Activated CD4-positive, alpha-beta T cell treated with anti-CD3 and anti-CD28 coated beads for 36 hours (primary cell): ENCODE measurements at regions of chr4 and their contacts with region 1.

Region 1: DNA sequence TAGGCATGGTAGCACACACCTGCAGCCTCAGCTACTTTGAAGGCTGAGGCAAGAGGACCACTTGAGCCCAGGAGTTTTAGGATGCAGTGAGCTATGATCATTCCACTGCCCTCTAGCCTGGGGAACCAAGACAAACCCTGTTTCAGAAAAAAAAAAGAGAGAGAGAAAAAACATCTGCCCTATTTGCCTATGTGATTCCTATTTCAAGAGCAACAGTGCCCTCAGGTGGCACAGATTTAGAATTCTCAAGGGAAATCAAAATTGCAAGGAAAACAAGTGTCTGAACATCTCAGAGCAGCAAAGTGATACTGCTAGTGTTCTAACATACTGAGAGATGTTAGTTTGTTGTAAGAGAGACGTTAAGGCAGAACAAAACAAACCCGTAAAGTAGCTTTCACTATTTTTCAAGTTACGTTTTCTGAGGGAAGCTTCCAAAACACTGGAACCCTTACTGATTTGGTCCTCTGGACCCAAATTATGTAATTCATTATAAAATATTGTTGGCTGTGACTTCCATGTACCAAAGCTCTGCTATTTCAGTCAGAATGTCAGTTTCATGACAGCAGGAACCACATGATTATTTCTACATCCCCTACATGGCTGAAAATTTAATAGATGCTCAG is 7.9 kb downstream of the BDH2 start:
- DNase-seq: peak; percentile 61
- ATAC-seq: peak; percentile 71
- H3K4me3 Mint-ChIP-seq: no peak overlapping the region
- H3K27ac Mint-ChIP-seq: peak overlapping the region; percentile 34
- H3K4me1 Mint-ChIP-seq: peaks cover 17% of the 10 kb centered on the region
- H3K27me3 Mint-ChIP-seq: no peaks in the 10 kb centered on the region

Region 2: GRCh38 chr4:102620697-102621497 is 470.8 kb before region 1 on chr4:
- CTCF ChIA-PET with region 1: interaction called, 5 read pairs
- POLR2A ChIA-PET with region 1: no interaction called
- intact Hi-C with region 1: loop called in 1 of 2 experiments (anchors 2 kb)
- DNase-seq: peak; percentile 30
- ATAC-seq: peak; percentile 25
- H3K4me3 Mint-ChIP-seq: no peak overlapping the region
- H3K27ac Mint-ChIP-seq: peak overlapping the region; percentile 47
- H3K4me1 Mint-ChIP-seq: peaks cover 50% of the 10 kb centered on the region
- H3K27me3 Mint-ChIP-seq: no peaks in the 10 kb centered on the region

Region 3: DNA sequence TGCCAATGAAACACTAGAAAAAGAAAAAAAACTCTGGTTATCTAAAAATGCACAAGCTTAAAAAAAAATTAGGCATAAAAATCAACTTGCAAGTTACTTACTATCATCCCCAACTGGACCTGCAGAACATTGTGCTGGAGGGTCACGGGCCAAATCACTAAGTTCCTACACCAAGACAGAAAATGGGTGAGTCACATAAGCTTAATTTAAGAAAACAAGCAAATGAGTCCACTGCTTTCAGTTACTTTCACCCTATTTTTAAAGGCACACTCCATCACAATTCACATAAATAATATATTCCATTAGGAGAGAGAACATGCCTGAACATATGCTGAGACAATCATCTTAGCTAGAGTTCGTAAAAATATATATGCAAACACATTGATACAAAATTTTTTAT is 282.0 kb before region 1 on chr4:
- CTCF ChIA-PET with region 1: no interaction called
- POLR2A ChIA-PET with region 1: interaction called, 10 read pairs
- intact Hi-C with region 1: no loop called
- DNase-seq: no peak
- ATAC-seq: no peak
- H3K4me3 Mint-ChIP-seq: no peak overlapping the region
- H3K27ac Mint-ChIP-seq: peak overlapping the region; percentile 58
- H3K4me1 Mint-ChIP-seq: peaks cover 90% of the 10 kb centered on the region
- H3K27me3 Mint-ChIP-seq: no peaks in the 10 kb centered on the region

Region 4: DNA sequence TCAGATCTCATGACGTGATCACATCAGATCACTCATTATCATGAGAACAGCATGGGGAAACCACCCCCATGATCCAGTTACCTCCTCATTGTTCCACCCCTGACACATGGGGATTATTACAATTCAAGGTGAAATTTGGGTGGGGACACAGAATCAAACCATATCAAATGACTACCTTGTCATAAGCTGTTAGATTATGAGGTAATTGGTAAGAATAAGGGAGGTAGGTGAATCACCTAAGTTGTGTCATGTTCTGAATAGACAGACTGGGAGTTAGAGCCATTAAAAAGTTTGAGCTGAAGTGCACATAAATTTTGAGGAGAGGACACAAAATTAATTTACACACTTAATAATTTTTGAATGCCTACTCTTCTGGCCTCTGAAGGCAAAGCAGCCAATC is 96.9 kb before region 1 on chr4:
- CTCF ChIA-PET with region 1: no interaction called
- POLR2A ChIA-PET with region 1: no interaction called
- intact Hi-C with region 1: no loop called
- DNase-seq: no peak
- ATAC-seq: peak; percentile 57
- H3K4me3 Mint-ChIP-seq: no peak overlapping the region
- H3K27ac Mint-ChIP-seq: no peak overlapping the region
- H3K4me1 Mint-ChIP-seq: peaks cover 2% of the 10 kb centered on the region
- H3K27me3 Mint-ChIP-seq: no peaks in the 10 kb centered on the region

Region 5: GRCh38 chr4:103046416-103047290 is 45.1 kb before region 1 on chr4:
- CTCF ChIA-PET with region 1: interaction called, 66 read pairs
- POLR2A ChIA-PET with region 1: no interaction called
- intact Hi-C with region 1: loop called (anchors 1 kb)
- DNase-seq: peak; percentile 49
- ATAC-seq: peak; percentile 96
- H3K4me3 Mint-ChIP-seq: no peak overlapping the region
- H3K27ac Mint-ChIP-seq: no peak overlapping the region
- H3K4me1 Mint-ChIP-seq: peaks cover 10% of the 10 kb centered on the region
- H3K27me3 Mint-ChIP-seq: no peaks in the 10 kb centered on the region